ENCODE measurements at regions of chr2 and their contacts with region 1.

Region 1: GRCh38 chr2:172484253-172484652 is 56.9 kb downstream of the ITGA6 start:
- DNase-seq: peak in 7 of 9 donors; percentile 46 to 68 (median 61)
- ATAC-seq: peak; percentile 66
- H3K4me3 ChIP-seq: no peak overlapping the region
- H3K4me3 Mint-ChIP-seq: peak overlapping the region in 8 of 10 donors; percentile 1 to 81 (median 41)
- H3K27ac ChIP-seq: peak overlapping the region; percentile 16
- H3K27ac Mint-ChIP-seq: peak overlapping the region in 8 of 9 donors; percentile 76 to 94 (median 84)
- H3K4me1 ChIP-seq: peaks cover 0 to 58% of the 10 kb centered on the region in 2 donors
- H3K4me1 Mint-ChIP-seq: peaks cover 27 to 92% (median 77%) of the 10 kb centered on the region in 7 donors
- H3K27me3 ChIP-seq: no peaks in the 10 kb centered on the region
- H3K27me3 Mint-ChIP-seq: no peaks in the 10 kb centered on the region

Region 2: DNA sequence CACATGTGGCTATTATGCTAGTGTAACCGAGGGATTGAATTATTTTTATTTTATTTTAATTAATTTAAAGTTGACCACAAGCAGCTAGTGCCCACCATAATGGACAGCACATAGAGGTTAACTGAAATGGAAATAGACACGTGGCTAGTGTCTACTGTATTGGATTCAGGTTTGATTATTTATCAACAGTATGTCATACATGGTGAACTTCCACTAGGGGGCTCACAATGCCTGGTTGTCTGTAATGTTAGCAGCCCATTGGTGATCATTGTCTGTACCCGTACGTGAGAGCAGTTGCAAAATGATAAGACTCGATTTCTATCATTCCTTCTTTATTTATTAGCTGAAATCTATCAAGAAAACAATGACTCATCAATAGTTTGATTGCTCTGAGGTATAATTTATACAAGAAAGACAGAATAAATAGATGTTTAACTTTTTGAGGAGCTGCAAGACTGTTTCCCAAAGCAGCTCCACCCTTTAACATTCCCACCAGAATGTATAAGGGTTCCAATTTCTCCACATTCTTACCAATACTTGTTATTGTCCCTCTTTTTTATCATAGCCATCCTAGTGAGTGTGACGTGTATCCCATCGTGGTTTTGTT is 885.4 kb before region 1 on chr2:
- CTCF ChIA-PET with region 1: no interaction called
- POLR2A ChIA-PET with region 1: no interaction called
- intact Hi-C with region 1: loop called in 1 of 2 experiments (anchors 1 kb)
- DNase-seq: peak in 7 of 9 donors; percentile 22 to 64 (median 51)
- ATAC-seq: peak; percentile 94
- H3K4me3 ChIP-seq: no peak overlapping the region
- H3K4me3 Mint-ChIP-seq: no peak overlapping the region
- H3K27ac ChIP-seq: no peak overlapping the region
- H3K27ac Mint-ChIP-seq: no peak overlapping the region
- H3K4me1 ChIP-seq: peaks cover 0 to 3% of the 10 kb centered on the region in 2 donors
- H3K4me1 Mint-ChIP-seq: peaks cover 0 to 6% (median 0%) of the 10 kb centered on the region in 7 donors
- H3K27me3 ChIP-seq: no peaks in the 10 kb centered on the region
- H3K27me3 Mint-ChIP-seq: peaks cover 0 to 25% (median 4%) of the 10 kb centered on the region in 5 donors

Region 3: DNA sequence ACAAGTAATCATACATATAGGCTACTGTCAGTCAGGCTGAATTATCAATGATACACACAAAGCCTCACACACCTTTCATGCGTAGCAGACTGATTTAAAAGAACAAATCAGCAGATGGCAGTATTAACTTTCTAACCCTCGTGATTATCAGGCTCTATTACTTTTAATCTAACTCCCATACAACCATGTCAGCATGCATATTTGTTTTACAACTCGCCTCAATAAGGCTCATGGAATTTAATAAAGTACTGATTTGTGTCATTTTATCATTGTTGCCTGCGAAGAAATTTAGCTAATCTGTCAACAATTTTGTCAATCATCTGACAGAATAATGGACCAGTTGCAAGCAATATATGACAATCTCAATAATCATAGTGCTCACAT is 673.0 kb before region 1 on chr2:
- CTCF ChIA-PET with region 1: interaction called, 4 read pairs
- POLR2A ChIA-PET with region 1: no interaction called
- intact Hi-C with region 1: loop called in 1 of 2 experiments (anchors 5 kb)
- DNase-seq: peak in 4 of 9 donors; percentile 3 to 28 (median 14)
- ATAC-seq: no peak
- H3K4me3 ChIP-seq: no peak overlapping the region
- H3K4me3 Mint-ChIP-seq: no peak overlapping the region
- H3K27ac ChIP-seq: no peak overlapping the region
- H3K27ac Mint-ChIP-seq: no peak overlapping the region
- H3K4me1 ChIP-seq: no peaks in the 10 kb centered on the region
- H3K4me1 Mint-ChIP-seq: no peaks in the 10 kb centered on the region
- H3K27me3 ChIP-seq: no peaks in the 10 kb centered on the region
- H3K27me3 Mint-ChIP-seq: no peaks in the 10 kb centered on the region

Region 4: DNA sequence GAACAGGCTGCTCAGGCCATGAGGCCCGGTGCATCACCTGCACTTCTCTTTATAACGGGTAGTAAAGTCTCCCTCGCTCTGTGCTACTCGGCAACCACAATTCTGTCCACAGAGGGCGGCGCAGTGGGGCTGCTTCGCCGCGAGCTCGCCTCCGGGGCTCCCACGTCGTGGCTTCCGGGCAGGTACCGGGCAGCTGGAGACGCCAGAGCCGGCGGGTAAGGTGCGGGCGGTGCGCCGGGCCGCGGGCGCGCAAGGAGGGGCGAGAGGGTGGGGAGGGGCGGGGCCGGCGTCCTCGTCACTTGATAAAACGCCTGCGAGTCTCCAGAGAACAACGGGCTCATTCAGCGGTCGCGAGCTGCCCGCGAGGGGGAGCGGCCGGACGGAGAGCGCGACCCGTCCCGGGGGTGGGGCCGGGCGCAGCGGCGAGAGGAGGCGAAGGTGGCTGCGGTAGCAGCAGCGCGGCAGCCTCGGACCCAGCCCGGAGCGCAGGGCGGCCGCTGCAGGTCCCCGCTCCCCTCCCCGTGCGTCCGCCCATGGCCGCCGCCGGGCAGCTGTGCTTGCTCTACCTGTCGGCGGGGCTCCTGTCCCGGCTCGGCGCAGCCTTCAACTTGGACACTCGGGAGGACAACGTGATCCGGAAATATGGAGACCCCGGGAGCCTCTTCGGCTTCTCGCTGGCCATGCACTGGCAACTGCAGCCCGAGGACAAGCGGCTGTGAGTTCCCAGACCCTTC is 56.8 kb before region 1 on chr2 and contains the start of gene ITGA6:
- CTCF ChIA-PET with region 1: interaction called, 10 read pairs
- POLR2A ChIA-PET with region 1: interaction called, 3 read pairs
- intact Hi-C with region 1: no loop called
- DNase-seq: peak; percentile 55 to 84 (median 80)
- ATAC-seq: peak; percentile 81
- H3K4me3 ChIP-seq: peak within 1 kb of the TSS; percentile 76
- H3K4me3 Mint-ChIP-seq: peak within 1 kb of the TSS in 7 of 10 donors; percentile 92 to 100 (median 98)
- H3K27ac ChIP-seq: peak within 1 kb of the TSS; percentile 76
- H3K27ac Mint-ChIP-seq: peak within 1 kb of the TSS in 8 of 9 donors; percentile 90 to 96 (median 95)
- H3K4me1 ChIP-seq: peaks cover 17 to 44% of the 10 kb centered on the region in 2 donors
- H3K4me1 Mint-ChIP-seq: peaks cover 21 to 65% (median 46%) of the 10 kb centered on the region in 7 donors
- H3K27me3 ChIP-seq: no peaks in the 10 kb centered on the region
- H3K27me3 Mint-ChIP-seq: peaks cover 0 to 82% (median 0%) of the 10 kb centered on the region in 5 donors
- total RNA-seq, gene ITGA6: 13.1 to 179 (median 135) TPM

Region 5: GRCh38 chr2:172496160-172496608 is 11.9 kb after region 1 on chr2:
- CTCF ChIA-PET with region 1: interaction called, 48 read pairs
- POLR2A ChIA-PET with region 1: interaction called, 22 read pairs
- intact Hi-C with region 1: loop called in 1 of 2 experiments (anchors 1 kb)
- DNase-seq: peak in 7 of 9 donors; percentile 72 to 88 (median 83)
- ATAC-seq: peak; percentile 94
- H3K4me3 ChIP-seq: peak overlapping the region; percentile 22
- H3K4me3 Mint-ChIP-seq: peak overlapping the region; percentile 54 to 86 (median 77)
- H3K27ac ChIP-seq: peak overlapping the region; percentile 68
- H3K27ac Mint-ChIP-seq: peak overlapping the region; percentile 86 to 99 (median 97)
- H3K4me1 ChIP-seq: peaks cover 22 to 83% of the 10 kb centered on the region in 2 donors
- H3K4me1 Mint-ChIP-seq: peaks cover 32 to 94% (median 85%) of the 10 kb centered on the region in 7 donors
- H3K27me3 ChIP-seq: no peaks in the 10 kb centered on the region
- H3K27me3 Mint-ChIP-seq: no peaks in the 10 kb centered on the region

Measured in naive thymus-derived CD4-positive, alpha-beta T cell (primary cell).